ENCODE measurements at regions of chr6 and their contacts with region 1.

Region 1: GRCh38 chr6:6665555-6666243 is 77.2 kb downstream of the LY86 start:
- DNase-seq: no peak
- H3K4me3 ChIP-seq: no peak overlapping the region
- H3K27ac ChIP-seq: no peak overlapping the region
- H3K4me1 ChIP-seq: no peaks in the 10 kb centered on the region
- H3K27me3 ChIP-seq: no peaks in the 10 kb centered on the region
- CTCF ChIP-seq: no peak
- POLR2A ChIP-seq: no peak

Region 2: GRCh38 chr6:6640926-6641325 is 24.8 kb before region 1 on chr6:
- intact Hi-C with region 1: loop called (anchors 2 kb)
- DNase-seq: no peak
- H3K4me3 ChIP-seq: no peak overlapping the region
- H3K27ac ChIP-seq: no peak overlapping the region
- H3K4me1 ChIP-seq: no peaks in the 10 kb centered on the region
- H3K27me3 ChIP-seq: no peaks in the 10 kb centered on the region
- CTCF ChIP-seq: no peak
- POLR2A ChIP-seq: no peak

Region 3: GRCh38 chr6:6696867-6697531 is 31.3 kb after region 1 on chr6:
- intact Hi-C with region 1: no loop called
- DNase-seq: no peak
- H3K4me3 ChIP-seq: no peak overlapping the region
- H3K27ac ChIP-seq: peak overlapping the region in 1 of 2 donors; percentile 82
- H3K4me1 ChIP-seq: peaks cover 0 to 7% of the 10 kb centered on the region in 2 donors
- H3K27me3 ChIP-seq: no peaks in the 10 kb centered on the region
- CTCF ChIP-seq: peak in 1 of 3 donors; percentile 45
- POLR2A ChIP-seq: no peak

Region 4: GRCh38 chr6:6736791-6737654 is 71.3 kb after region 1 on chr6:
- intact Hi-C with region 1: no loop called
- DNase-seq: no peak
- H3K4me3 ChIP-seq: peak overlapping the region; percentile 34 to 59 (median 47)
- H3K27ac ChIP-seq: peak overlapping the region in 1 of 2 donors; percentile 34
- H3K4me1 ChIP-seq: no peaks in the 10 kb centered on the region
- H3K27me3 ChIP-seq: no peaks in the 10 kb centered on the region
- CTCF ChIP-seq: no peak
- POLR2A ChIP-seq: no peak